Activated CD4-positive, alpha-beta T cell treated with anti-CD3 and anti-CD28 coated beads for 36 hours (primary cell): ENCODE measurements at regions of chr12 and their contacts with region 1.

Region 1: GRCh38 chr12:47963340-47964040 is at the start of gene TMEM106C:
- DNase-seq: peak; percentile 96
- ATAC-seq: peak; percentile 98
- H3K4me3 Mint-ChIP-seq: peak within 1 kb of the TSS; percentile 99
- H3K27ac Mint-ChIP-seq: peak within 1 kb of the TSS; percentile 87
- H3K4me1 Mint-ChIP-seq: peaks cover 34% of the 10 kb centered on the region
- H3K27me3 Mint-ChIP-seq: peaks cover 2% of the 10 kb centered on the region
- total RNA-seq, gene TMEM106C: 159 to 248 TPM

Region 2: GRCh38 chr12:47715393-47715876 is 248.1 kb before region 1 on chr12:
- CTCF ChIA-PET with region 1: interaction called, 4 read pairs
- POLR2A ChIA-PET with region 1: no interaction called
- intact Hi-C with region 1: loop called in 1 of 2 experiments (anchors 5 kb)
- DNase-seq: peak; percentile 91
- ATAC-seq: peak; percentile 86
- H3K4me3 Mint-ChIP-seq: no peak overlapping the region
- H3K27ac Mint-ChIP-seq: no peak overlapping the region
- H3K4me1 Mint-ChIP-seq: peaks cover 18% of the 10 kb centered on the region
- H3K27me3 Mint-ChIP-seq: no peaks in the 10 kb centered on the region

Region 3: DNA sequence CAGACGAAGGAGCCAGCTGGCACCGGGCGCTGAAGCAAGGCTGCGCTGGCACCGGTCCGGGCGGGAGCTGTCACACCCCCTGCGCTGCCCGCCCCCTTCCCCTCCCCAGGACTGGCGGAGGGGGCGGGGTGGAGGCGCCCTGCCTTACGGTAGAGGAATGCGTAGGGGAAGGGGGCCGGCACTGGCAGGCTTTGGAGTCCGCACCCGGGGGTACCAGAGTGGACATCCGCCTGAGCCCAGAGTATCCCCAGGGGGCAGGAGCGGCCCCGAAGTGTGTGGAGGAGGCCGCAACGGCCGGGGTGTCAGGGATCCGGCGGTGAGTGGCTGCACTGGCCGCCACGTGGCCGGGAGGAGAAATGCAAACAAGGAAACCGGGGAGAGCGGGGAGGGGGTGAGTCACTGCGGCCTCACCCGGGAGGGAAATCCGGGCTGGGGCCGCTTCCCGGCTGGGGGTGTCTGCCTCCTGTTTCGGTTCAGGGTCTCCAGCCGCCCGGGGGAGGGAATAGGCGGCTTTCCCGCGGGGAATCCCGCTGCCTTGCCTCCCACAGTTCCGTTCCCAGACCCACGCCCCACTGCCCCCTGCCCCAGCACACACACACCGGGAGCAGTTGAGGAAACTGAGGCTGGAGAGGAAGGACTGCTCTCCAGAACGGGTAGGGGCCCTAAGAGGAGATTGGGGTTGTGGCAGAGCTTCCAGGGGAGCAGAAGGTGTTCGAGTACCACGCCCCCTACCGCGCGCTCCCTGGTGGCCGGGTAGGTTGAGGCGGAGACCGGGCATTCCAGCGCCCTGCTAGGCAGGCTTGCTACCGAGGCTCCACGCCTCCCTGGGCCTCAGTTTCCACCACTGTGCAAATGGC is 204.4 kb before region 1 on chr12 and contains the start of gene RAPGEF3:
- CTCF ChIA-PET with region 1: no interaction called
- POLR2A ChIA-PET with region 1: no interaction called
- intact Hi-C with region 1: loop called in 1 of 2 experiments (anchors 10 kb)
- DNase-seq: peak; percentile 84
- ATAC-seq: peak; percentile 74
- H3K4me3 Mint-ChIP-seq: peak within 1 kb of the TSS; percentile 63
- H3K27ac Mint-ChIP-seq: no peak within 1 kb of the TSS
- H3K4me1 Mint-ChIP-seq: peaks cover 47% of the 10 kb centered on the region
- H3K27me3 Mint-ChIP-seq: no peaks in the 10 kb centered on the region
- total RNA-seq, gene RAPGEF3: 0.43 to 0.83 TPM

Region 4: DNA sequence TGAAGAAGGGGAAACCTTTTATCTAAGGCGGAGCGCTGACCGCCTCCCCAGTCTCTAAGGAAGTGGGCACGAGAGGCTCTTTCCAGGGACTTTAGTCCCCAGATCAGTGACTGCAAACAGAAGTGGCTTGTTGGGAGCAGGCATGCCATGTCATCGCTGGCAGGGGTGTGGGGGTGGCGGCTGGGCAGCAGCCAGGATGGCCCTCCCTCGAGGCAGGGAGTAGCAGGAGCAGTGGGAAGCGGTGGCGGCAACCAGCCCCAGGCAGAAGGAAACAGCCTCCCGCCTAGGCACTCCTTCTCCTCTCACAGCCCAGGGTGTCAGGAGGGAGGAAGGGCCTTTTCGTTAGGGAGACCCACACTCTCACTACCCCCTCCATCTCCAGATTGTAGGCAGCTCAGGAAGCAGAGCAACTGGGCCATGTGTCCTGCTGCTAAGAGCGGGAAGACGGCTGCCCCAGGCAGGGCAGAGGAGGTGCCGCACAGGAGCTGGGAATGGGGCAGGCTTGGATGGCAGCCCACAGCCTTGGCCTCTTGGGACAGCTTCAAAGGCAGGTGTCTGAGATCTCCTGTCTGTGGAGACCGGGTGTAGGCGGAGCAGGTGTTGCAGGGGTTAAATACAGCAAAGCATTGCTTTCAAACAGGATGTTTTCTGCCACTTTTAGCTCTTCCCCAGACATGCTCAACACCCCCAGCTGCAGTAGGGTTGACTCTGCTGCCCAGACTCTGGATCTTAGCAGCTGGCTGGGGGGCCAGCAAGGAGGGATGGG is 80.5 kb before region 1 on chr12:
- CTCF ChIA-PET with region 1: interaction called, 15 read pairs
- POLR2A ChIA-PET with region 1: no interaction called
- intact Hi-C with region 1: loop called in 1 of 2 experiments (anchors 1 kb)
- DNase-seq: peak; percentile 70
- ATAC-seq: peak; percentile 14
- H3K4me3 Mint-ChIP-seq: peak overlapping the region; percentile 78
- H3K27ac Mint-ChIP-seq: peak overlapping the region; percentile 97
- H3K4me1 Mint-ChIP-seq: peaks cover 81% of the 10 kb centered on the region
- H3K27me3 Mint-ChIP-seq: no peaks in the 10 kb centered on the region

Region 5: DNA sequence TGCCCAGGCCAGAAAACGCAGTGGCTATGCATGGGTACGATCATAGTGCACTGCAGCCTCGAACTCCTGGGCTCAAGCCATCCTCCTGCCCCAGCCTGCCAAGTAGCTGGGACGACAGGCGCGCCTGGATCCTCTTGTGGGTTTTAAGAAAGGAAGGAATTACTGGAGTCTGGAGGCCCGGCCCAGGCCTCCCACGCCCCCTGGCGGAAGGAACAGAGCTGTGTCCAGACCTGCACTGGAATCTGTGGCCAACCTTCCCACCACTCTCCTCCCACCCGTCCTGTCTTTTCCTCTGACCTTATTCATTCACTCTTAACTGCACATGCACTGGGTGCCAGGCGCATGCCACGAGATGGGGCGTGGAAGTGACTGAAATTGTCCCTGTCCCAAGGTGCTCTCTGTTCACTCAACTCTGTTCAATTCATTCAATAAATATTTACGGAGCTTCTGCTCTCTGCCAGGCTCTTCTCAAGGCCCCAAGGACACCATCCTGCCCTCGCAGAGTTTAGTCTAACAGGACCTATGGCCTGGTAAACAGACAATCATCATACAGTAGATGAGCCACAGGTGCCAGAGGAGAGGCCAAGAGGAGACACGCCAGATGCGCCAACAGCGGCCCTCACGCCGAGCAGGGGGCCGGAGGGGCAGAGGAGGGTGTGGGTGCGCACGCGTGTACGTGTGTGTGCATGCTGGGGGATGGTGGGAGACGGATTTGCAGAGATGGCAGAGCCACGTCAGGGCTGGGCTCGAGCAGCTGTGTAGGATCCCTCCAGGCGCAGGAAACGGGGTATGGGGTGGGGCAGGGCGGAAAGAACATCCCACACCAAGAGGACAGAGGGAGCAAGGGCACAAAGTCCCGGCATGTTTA is 13.8 kb before region 1 on chr12:
- CTCF ChIA-PET with region 1: interaction called, 29 read pairs
- POLR2A ChIA-PET with region 1: no interaction called
- intact Hi-C with region 1: no loop called
- DNase-seq: peak; percentile 78
- ATAC-seq: peak; percentile 83
- H3K4me3 Mint-ChIP-seq: no peak overlapping the region
- H3K27ac Mint-ChIP-seq: peak overlapping the region; percentile 10
- H3K4me1 Mint-ChIP-seq: peaks cover 10% of the 10 kb centered on the region
- H3K27me3 Mint-ChIP-seq: peaks cover 3% of the 10 kb centered on the region

Region 6: GRCh38 chr12:48023399-48023785 is 59.9 kb after region 1 on chr12:
- CTCF ChIA-PET with region 1: no interaction called
- POLR2A ChIA-PET with region 1: no interaction called
- intact Hi-C with region 1: no loop called
- DNase-seq: no peak
- ATAC-seq: no peak
- H3K4me3 Mint-ChIP-seq: no peak overlapping the region
- H3K27ac Mint-ChIP-seq: no peak overlapping the region
- H3K4me1 Mint-ChIP-seq: no peaks in the 10 kb centered on the region
- H3K27me3 Mint-ChIP-seq: peaks cover 8% of the 10 kb centered on the region

Region 7: DNA sequence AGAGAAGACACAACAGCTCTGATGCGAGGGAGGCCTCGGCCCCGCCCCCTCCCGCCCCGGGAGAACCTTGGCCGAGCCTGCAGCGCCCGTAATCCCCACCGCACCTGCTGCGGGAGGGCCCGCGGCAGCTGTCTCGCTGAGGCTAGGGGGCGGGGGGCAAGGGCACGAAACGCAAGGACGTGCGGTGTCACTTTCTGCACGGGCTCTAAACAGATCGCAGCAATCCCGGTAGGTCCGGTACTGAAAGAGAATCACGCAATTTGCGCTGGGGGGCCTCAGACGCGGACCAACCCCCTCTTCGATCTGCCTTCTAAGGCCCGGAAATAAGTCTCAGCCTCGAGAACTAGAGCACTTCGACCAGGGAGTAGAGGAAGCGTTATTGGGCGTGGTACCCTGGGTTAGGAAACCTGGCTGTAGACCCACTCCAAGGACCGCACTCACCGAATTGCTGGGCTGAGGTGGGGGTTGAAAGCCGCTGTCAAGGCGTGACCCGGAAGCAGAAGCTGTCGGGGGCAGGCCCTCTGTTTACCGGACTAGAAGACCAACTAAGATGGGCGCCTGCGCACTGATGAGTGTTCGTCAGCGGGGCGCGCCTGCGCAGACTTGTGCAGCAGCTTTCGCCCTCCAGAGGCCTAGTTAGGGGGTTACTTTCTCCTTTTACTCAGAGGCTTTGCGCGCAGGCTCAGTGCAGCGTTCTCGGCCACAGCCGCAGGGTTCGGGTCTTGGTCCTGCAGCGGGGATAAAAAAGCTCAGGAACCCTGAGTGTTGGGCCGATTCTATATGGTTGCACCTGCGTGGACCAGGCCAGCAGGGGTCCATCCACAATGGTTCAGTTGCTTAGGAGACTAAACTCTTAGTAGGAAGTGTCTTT is 193.8 kb after region 1 on chr12 and contains the start of gene ASB8:
- CTCF ChIA-PET with region 1: interaction called, 4 read pairs
- POLR2A ChIA-PET with region 1: no interaction called
- intact Hi-C with region 1: loop called (anchors 1 to 5 kb)
- DNase-seq: peak; percentile 100
- ATAC-seq: peak; percentile 96
- H3K4me3 Mint-ChIP-seq: peak within 1 kb of the TSS; percentile 88
- H3K27ac Mint-ChIP-seq: peak within 1 kb of the TSS; percentile 94
- H3K4me1 Mint-ChIP-seq: peaks cover 40% of the 10 kb centered on the region
- H3K27me3 Mint-ChIP-seq: no peaks in the 10 kb centered on the region
- total RNA-seq, gene ASB8: 28.8 to 33.0 TPM

Region 8: GRCh38 chr12:48183091-48183875 is 219.8 kb after region 1 on chr12 and contains the start of gene CCDC184:
- CTCF ChIA-PET with region 1: no interaction called
- POLR2A ChIA-PET with region 1: no interaction called
- intact Hi-C with region 1: loop called in 1 of 2 experiments (anchors 1 kb)
- DNase-seq: peak; percentile 78
- ATAC-seq: peak; percentile 80
- H3K4me3 Mint-ChIP-seq: peak within 1 kb of the TSS; percentile 81
- H3K27ac Mint-ChIP-seq: peak within 1 kb of the TSS; percentile 31
- H3K4me1 Mint-ChIP-seq: peaks cover 20% of the 10 kb centered on the region
- H3K27me3 Mint-ChIP-seq: peaks cover 34% of the 10 kb centered on the region
- total RNA-seq, gene CCDC184: 0.25 to 0.37 TPM